AG04449 (cell line): ENCODE measurements at regions of chr3 and their contacts with region 1.

Region 1: DNA sequence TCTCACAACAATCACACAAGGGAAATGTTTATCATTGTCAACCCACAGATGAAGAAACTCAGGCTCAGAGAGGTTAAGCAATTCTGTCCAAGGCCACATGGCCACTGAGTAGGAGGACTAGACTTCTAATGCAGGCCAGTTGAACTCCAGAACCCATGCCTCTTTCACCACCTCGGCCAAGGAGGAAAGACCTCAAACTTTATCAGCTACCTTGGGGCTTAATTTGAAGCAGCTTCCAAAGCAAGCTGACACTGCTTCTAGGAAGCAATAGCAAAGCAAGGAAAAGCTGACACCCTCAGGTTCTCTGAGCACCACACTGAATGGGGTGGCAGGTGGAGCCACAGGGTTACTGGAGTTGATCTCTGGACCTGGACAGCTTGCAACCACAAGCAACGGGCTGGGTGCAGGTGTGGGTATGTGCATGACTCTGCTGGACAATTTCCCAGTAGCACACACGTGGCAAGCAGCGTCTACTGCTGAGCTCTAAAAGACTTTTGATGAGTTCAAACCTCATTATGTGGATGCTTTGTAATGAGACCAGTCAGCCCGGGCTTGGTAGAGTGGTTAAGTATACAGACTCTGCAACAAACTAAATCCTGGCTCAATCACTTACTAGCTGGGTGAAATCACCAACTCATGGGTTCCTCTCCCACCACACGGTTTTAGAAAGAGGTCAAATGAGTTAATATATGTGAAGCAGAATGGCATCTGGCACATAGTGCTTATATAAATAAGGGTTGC is 23.1 kb downstream of the CCNL1 start:
- DNase-seq: no peak
- H3K4me3 ChIP-seq: no peak overlapping the region
- CTCF ChIP-seq: no peak

Region 2: DNA sequence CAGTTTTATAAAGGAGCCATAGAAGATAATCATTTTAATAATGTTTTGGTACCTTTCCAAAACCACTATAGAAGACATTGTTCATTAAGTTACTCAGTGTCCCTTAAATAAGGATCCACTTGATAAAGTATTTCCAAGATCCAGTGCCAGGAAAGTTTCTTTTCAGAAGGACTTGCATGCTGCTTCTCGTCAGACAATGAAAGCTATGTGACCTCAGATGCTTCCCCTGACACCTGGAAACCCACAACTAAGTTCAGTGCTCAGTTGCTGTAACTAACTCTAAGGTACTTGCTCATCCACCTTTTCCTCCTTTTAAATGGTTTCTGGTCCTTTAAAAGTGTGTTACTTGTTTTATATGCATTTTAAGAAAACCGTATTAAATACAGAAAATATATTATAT is 589.2 kb before region 1 on chr3:
- CTCF ChIA-PET with region 1: interaction called, 21 read pairs
- POLR2A ChIA-PET with region 1: no interaction called
- DNase-seq: no peak
- H3K4me3 ChIP-seq: no peak overlapping the region
- CTCF ChIP-seq: no peak

Region 3: DNA sequence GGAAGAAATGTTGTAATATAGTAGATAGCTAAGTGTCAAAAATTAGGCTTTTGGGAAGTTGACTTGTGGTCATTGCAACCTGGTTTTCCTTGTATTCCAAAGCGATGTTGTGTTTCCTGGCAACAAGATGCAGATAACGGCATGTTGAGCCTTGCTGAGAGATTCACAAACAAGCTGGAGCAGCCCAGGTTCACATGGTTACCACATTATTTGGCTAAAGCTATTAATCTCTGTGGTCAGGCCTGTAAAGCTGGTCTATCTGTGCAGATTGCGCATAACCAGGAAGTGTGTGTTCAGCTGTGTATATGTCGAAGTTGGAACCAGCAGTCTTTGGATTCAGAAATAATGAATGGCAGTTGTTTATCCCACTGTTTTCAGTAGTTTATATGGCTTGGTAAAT is 455.8 kb before region 1 on chr3:
- CTCF ChIA-PET with region 1: interaction called, 17 read pairs
- POLR2A ChIA-PET with region 1: no interaction called
- DNase-seq: peak; percentile 58
- H3K4me3 ChIP-seq: no peak overlapping the region
- CTCF ChIP-seq: no peak

Region 4: GRCh38 chr3:157088601-157089454 is 48.0 kb before region 1 on chr3:
- CTCF ChIA-PET with region 1: interaction called, 90 read pairs
- POLR2A ChIA-PET with region 1: interaction called, 8 read pairs
- DNase-seq: peak; percentile 68
- H3K4me3 ChIP-seq: peak overlapping the region; percentile 70
- CTCF ChIP-seq: peak; percentile 10

Region 5: DNA sequence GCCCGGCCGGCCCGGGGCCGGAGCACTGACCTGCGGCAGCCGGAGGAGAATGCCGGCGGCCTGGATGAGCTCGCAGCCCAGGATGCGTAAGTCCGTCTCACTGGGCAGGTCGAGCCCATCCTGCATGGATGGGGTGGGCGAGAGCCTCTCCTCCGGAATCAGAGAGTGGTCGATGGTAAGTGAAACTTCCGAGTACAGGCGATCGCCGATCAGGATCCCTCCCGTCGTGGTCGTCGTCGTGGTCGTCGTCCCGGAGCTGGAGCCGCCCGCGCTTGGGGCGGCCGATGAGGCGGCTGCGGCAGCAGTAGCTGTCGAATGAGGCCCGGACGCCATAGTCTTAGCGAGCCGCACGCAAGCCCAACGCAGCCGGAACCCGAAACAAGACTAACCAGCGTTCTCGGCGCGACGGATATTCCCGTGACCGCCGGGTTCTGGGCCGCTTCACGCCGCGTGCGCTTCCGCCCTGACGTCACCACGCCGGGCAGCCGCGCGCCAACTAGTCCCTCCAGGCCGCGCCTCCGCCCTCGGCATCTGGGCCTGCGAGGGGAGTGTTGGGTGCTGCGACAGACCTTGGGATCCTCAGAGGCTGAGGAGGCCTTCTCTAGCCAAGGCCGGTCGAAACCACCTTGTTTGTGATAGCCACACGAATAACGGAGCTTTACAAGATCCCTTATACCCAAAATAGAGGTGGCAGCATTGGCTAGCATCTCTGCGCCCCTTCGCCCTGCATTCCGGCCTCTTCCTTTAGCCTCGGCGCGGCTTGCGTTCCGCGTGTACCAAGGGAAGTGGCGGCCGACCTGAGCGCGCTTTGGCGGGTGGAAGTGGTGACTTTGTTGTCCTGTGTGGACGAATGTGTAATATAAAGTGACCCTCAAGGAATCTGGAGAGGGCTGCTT is 23.2 kb after region 1 on chr3 and contains the start of gene CCNL1:
- CTCF ChIA-PET with region 1: interaction called, 22 read pairs
- POLR2A ChIA-PET with region 1: interaction called, 3 read pairs
- DNase-seq: peak; percentile 92
- H3K4me3 ChIP-seq: peak within 1 kb of the TSS; percentile 89
- CTCF ChIP-seq: no peak